Mucosa of descending colon (tissue), 3 donors: ENCODE measurements at regions of chr9 and their contacts with region 1.

Region 1: DNA sequence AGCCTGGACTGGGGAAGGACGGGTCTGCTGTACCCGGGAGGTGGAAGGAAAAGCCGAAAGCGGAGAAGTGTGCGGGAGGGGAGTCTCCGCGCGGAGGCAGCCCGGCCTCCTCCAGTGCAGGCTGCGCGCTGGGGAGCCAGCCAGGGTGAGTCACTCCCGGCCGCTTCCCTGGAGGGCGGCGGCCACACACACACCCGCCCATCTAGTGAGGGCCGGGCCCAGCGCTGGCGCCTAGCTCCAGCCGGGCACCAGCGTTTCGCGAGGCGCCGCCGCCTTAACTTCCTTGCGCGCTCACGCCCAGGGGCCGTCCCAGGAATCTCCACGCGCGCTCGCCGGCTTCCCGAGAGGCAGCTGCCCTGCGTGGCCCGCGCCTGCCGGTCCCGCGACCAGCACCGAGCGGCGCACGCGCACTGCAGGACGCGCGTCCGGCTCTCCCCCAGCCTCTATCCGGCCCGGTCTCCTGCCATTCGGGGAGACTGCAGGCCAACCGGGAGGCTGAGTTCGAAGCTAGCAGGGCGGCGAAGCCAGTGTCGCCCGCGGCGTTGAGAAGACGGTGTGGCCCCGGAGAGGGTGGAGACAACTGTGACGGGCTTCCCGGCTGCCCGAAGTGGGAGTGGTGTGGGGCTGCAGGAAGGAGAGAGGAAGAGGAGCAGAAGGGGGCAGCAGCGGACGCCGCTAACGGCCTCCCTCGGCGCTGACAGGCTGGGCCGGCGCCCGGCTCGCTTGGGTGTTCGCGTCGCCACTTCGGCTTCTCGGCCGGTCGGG is at the start of gene JAK2:
- DNase-seq: peak; percentile 90 to 95 (median 92)
- ATAC-seq: peak; percentile 92
- H3K4me3 ChIP-seq: peak within 1 kb of the TSS; percentile 78
- H3K4me1 ChIP-seq: peaks cover 20% of the 10 kb centered on the region
- CTCF ChIP-seq: no peak
- total RNA-seq, gene JAK2: 17.0 to 24.4 (median 17.5) TPM

Region 2: GRCh38 chr9:4762108-4762885 is 222.5 kb before region 1 on chr9:
- intact Hi-C with region 1: loop called (anchors 10 kb)
- DNase-seq: peak; percentile 63 to 95 (median 86)
- ATAC-seq: peak; percentile 89
- H3K4me3 ChIP-seq: no peak overlapping the region
- H3K4me1 ChIP-seq: peaks cover 12% of the 10 kb centered on the region
- CTCF ChIP-seq: peak; percentile 59

Region 3: DNA sequence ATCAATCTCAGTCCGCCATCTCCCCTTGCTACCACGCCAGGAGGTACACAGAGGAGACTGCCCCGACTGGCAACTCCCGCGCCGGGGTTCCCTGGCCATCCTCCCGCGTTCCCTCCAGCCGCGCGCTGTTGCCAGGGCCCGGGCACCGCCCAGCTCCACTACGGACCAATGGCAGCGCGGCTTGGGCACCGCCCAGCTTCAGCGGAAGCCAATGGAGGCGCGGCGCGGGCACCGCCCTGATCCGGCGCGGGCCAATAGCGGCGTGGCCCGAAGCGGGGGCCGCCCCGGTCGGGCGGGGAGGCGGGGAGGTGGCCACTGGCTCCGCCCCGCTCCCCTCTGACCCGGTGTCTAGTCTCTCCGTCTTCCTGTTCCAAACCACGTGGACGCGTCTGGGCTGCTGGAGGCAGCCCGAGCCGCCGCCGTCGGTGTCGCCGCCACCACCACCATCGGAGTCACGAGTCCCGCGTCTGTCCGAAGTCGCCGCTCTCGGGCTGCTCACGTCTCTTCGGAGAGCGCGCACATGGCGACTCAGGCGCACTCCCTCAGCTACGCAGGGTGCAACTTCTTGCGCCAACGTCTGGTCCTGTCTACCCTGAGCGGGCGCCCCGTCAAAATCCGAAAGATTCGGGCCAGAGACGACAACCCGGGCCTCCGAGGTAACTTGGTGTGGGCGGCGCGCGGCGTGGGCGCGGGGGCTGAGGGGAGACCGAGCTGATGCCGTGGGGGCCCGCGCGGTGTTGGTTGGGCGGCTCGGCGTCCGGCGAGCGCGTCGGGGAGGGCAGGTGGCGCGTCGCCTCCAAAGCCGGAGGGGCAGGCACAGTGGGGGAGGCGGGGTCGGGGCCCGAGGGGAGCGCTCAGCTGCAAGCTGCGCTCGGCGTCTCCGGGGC is 192.0 kb before region 1 on chr9 and contains the start of gene RCL1:
- intact Hi-C with region 1: loop called in 1 of 2 experiments (anchors 10 kb)
- DNase-seq: peak; percentile 95 to 98 (median 97)
- ATAC-seq: peak; percentile 99
- H3K4me3 ChIP-seq: peak within 1 kb of the TSS; percentile 55
- H3K4me1 ChIP-seq: peaks cover 10% of the 10 kb centered on the region
- CTCF ChIP-seq: no peak
- total RNA-seq, gene RCL1: 12.0 to 13.3 (median 12.4) TPM